Testis (tissue), 5 donors: ENCODE measurements at regions of chr21 and their contacts with region 1.

Region 1: GRCh38 chr21:39712972-39713371 is 32.0 kb upstream of the IGSF5 start:
- DNase-seq: no peak
- H3K4me3 ChIP-seq: no peak overlapping the region
- H3K27ac ChIP-seq: no peak overlapping the region
- H3K4me1 ChIP-seq: no peaks in the 10 kb centered on the region
- H3K27me3 ChIP-seq: no peaks in the 10 kb centered on the region
- CTCF ChIP-seq: no peak
- POLR2A ChIP-seq: no peak

Region 2: GRCh38 chr21:39523399-39523798 is 189.6 kb before region 1 on chr21:
- intact Hi-C with region 1: loop called (anchors 5 kb)
- DNase-seq: no peak
- H3K4me3 ChIP-seq: no peak overlapping the region
- H3K27ac ChIP-seq: no peak overlapping the region
- H3K4me1 ChIP-seq: peaks cover 10% of the 10 kb centered on the region
- H3K27me3 ChIP-seq: no peaks in the 10 kb centered on the region
- CTCF ChIP-seq: no peak
- POLR2A ChIP-seq: no peak

Region 3: GRCh38 chr21:39637197-39637970 is 75.6 kb before region 1 on chr21:
- intact Hi-C with region 1: no loop called
- DNase-seq: no peak
- H3K4me3 ChIP-seq: no peak overlapping the region
- H3K27ac ChIP-seq: no peak overlapping the region
- H3K4me1 ChIP-seq: no peaks in the 10 kb centered on the region
- H3K27me3 ChIP-seq: no peaks in the 10 kb centered on the region
- CTCF ChIP-seq: no peak
- POLR2A ChIP-seq: no peak

Region 4: DNA sequence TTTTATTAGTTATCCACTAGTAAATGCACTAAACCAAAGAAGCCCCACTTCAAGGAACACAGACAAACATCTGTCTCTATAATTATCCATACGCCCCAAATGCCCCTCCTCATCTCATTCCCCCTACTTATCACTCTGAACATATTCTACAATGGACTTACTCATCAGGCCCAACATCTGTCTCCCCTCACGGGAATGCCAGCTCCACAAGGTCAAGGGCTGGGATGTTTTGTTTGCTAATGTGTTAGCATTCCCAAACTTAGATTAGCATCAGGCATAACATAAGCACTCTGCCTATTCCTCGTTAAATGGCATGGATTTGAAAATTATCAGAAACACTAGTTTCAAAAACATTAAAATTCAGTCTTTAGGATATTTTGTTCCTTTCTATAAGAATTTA is 854.5 kb after region 1 on chr21:
- intact Hi-C with region 1: no loop called
- DNase-seq: no peak
- H3K4me3 ChIP-seq: no peak overlapping the region
- H3K27ac ChIP-seq: no peak overlapping the region
- H3K4me1 ChIP-seq: no peaks in the 10 kb centered on the region
- H3K27me3 ChIP-seq: no peaks in the 10 kb centered on the region
- CTCF ChIP-seq: no peak
- POLR2A ChIP-seq: no peak